ENCODE measurements at regions of chr15 and their contacts with region 1.

Region 1: DNA sequence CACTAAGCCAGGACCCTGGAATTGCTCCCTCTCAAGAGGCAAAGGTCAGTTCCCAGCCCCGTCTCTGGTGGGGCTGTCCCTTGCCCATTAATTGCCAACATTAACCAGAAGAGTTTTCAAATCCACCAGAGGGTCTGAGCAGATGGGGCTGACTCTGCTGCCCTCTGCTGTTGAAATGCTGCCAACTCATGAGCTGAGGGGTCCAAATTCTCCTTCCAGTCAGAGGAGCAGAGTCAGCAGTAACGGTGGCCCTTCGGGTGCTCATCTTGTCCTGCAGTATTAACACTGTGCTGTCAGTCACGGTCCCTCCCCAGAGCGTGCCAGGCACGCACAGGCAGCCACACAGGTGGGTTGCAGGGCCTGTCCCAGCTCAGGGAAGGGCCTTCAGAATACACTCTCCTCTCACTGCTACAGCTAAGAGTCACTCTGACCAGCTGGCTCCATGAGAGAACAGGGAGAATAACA is 10.7 kb upstream of the SPTBN5 start:
- DNase-seq: peak; percentile 50 to 86 (median 76)
- ATAC-seq: peak; percentile 86
- H3K4me3 ChIP-seq: no peak overlapping the region
- H3K4me3 Mint-ChIP-seq: no peak overlapping the region
- H3K27ac ChIP-seq: no peak overlapping the region
- H3K27ac Mint-ChIP-seq: peak overlapping the region; percentile 57
- H3K4me1 ChIP-seq: peaks cover 3% of the 10 kb centered on the region
- H3K4me1 Mint-ChIP-seq: peaks cover 6% of the 10 kb centered on the region
- H3K27me3 ChIP-seq: no peaks in the 10 kb centered on the region
- H3K27me3 Mint-ChIP-seq: no peaks in the 10 kb centered on the region
- CTCF ChIP-seq: peak; percentile 92

Region 2: GRCh38 chr15:41465822-41466421 is 438.7 kb before region 1 on chr15:
- CTCF ChIA-PET with region 1: interaction called, 7 read pairs
- POLR2A ChIA-PET with region 1: no interaction called
- intact Hi-C with region 1: loop called (anchors 2 to 5 kb)
- DNase-seq: peak in 3 of 9 experiments; percentile 22 to 65 (median 60)
- ATAC-seq: peak; percentile 69
- H3K4me3 ChIP-seq: no peak overlapping the region
- H3K4me3 Mint-ChIP-seq: no peak overlapping the region
- H3K27ac ChIP-seq: no peak overlapping the region
- H3K27ac Mint-ChIP-seq: peak overlapping the region; percentile 73
- H3K4me1 ChIP-seq: no peaks in the 10 kb centered on the region
- H3K4me1 Mint-ChIP-seq: peaks cover 6% of the 10 kb centered on the region
- H3K27me3 ChIP-seq: no peaks in the 10 kb centered on the region
- H3K27me3 Mint-ChIP-seq: no peaks in the 10 kb centered on the region
- CTCF ChIP-seq: peak; percentile 97

Region 3: DNA sequence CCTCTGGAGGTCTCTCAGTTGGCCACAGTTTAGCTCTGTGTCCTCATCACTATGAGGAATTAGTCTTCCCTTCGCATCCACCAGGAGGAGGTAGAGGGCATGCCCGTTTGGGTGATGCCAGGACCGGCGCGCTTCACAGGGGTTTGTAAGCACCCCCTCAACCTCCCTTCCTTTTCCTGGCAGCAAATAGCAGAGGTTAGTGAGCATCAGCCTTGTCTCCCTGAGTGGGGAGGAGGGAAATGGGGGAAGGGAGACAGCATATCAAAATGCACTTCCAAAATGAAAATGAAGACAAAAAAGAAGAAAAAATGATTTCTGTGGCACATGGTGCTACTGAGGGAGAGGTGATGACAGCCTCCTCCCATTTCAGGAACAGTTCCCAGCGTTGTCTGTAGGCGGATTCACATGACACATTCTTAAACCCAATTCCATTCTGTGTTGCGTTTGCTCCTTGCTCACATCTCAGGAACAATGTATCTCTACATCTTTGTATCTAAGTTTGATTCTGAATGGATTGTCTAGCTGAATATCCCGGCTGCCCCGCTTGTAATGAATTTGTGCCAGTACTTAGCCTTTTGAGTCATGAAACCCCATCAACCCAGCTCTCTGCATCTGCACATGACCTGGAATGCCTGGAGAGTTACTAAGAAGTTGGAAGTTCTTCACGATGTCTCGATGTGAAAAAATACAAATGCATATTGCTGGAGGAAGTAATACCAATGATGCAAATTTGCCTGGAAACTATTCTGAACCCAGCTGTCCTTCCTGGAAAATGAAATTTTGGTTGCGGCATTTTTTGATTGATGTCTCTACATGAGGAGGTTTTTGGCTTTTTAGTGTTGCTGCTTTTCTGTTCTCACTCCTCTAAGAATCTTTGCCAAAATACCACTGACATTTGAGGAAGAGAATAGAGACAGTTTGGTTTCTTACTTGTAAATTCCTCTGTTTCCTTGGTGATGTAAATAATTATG is 300.3 kb before region 1 on chr15:
- CTCF ChIA-PET with region 1: interaction called, 3 read pairs
- POLR2A ChIA-PET with region 1: no interaction called
- intact Hi-C with region 1: loop called in 1 of 2 experiments (anchors 5 kb)
- DNase-seq: peak; percentile 22 to 76 (median 59)
- ATAC-seq: peak; percentile 97
- H3K4me3 ChIP-seq: no peak overlapping the region
- H3K4me3 Mint-ChIP-seq: peak overlapping the region; percentile 53
- H3K27ac ChIP-seq: no peak overlapping the region
- H3K27ac Mint-ChIP-seq: no peak overlapping the region
- H3K4me1 ChIP-seq: peaks cover 4% of the 10 kb centered on the region
- H3K4me1 Mint-ChIP-seq: peaks cover 8% of the 10 kb centered on the region
- H3K27me3 ChIP-seq: no peaks in the 10 kb centered on the region
- H3K27me3 Mint-ChIP-seq: peaks cover 12% of the 10 kb centered on the region
- CTCF ChIP-seq: peak; percentile 71

Region 4: GRCh38 chr15:41811432-41812195 is 93.0 kb before region 1 on chr15:
- CTCF ChIA-PET with region 1: interaction called, 41 read pairs
- POLR2A ChIA-PET with region 1: no interaction called
- intact Hi-C with region 1: loop called (anchors 1 kb)
- DNase-seq: peak; percentile 53 to 82 (median 77)
- ATAC-seq: peak; percentile 98
- H3K4me3 ChIP-seq: no peak overlapping the region
- H3K4me3 Mint-ChIP-seq: no peak overlapping the region
- H3K27ac ChIP-seq: no peak overlapping the region
- H3K27ac Mint-ChIP-seq: peak overlapping the region; percentile 14
- H3K4me1 ChIP-seq: peaks cover 17% of the 10 kb centered on the region
- H3K4me1 Mint-ChIP-seq: peaks cover 16% of the 10 kb centered on the region
- H3K27me3 ChIP-seq: no peaks in the 10 kb centered on the region
- H3K27me3 Mint-ChIP-seq: no peaks in the 10 kb centered on the region
- CTCF ChIP-seq: peak; percentile 86

Region 5: DNA sequence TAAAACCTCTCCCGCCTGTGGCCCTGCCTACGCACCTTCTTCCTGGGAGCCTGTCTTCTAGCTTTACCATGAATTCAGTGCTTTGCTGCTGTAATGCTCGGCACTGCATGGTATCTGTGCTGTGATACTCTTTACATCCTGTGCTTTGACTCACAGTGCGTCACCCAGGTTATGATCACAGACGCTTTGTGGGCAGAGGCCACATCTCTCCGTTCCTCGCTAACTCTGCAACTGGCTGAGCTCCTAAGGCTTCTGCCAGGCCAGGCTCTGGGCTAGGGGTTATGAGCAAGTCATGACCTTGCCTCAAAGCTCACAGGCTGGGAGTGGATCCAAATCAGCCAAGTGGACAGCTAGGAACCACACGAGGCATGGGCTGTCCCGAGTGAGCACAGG is 33.9 kb before region 1 on chr15:
- CTCF ChIA-PET with region 1: interaction called, 7 read pairs
- POLR2A ChIA-PET with region 1: no interaction called
- intact Hi-C with region 1: loop called (anchors 5 kb)
- DNase-seq: peak in 8 of 9 experiments; percentile 20 to 75 (median 60)
- ATAC-seq: peak; percentile 95
- H3K4me3 ChIP-seq: no peak overlapping the region
- H3K4me3 Mint-ChIP-seq: no peak overlapping the region
- H3K27ac ChIP-seq: no peak overlapping the region
- H3K27ac Mint-ChIP-seq: peak overlapping the region; percentile 60
- H3K4me1 ChIP-seq: peaks cover 10% of the 10 kb centered on the region
- H3K4me1 Mint-ChIP-seq: peaks cover 4% of the 10 kb centered on the region
- H3K27me3 ChIP-seq: no peaks in the 10 kb centered on the region
- H3K27me3 Mint-ChIP-seq: no peaks in the 10 kb centered on the region
- CTCF ChIP-seq: no peak

Region 6: DNA sequence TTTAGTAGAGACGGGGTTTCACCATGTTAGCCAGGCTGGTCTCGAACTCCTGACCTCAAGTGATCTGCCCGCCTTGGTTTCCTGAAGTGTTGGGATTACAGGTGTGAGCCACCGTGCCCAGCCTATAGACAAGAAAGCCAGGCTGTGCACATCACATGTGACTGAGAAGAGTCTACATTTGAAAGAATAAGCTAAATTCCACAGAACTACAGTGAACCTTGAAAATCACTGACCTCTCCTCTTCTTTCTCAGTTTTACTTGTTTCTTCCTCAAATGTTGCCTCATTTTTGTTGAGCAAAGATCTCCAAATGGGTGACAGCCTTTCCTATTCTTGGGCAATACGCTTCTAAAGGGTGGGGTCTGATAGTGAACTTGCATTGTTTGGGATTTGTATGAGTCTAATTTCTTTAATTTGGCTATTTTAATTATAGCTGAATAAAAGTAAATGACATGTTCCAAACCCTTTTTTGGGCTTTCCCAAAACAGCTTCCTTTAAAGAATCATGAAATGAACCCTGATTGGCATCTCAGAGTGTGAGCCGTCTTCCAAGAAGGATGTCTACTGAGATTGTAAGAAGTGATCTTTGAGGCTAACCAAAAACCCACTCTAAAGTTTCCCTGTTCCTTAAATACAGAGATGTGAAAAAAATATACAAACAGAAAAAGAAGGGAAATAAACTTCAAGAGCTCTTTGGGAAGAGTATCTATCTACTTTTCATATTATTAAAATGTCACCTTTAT is 10.9 kb after region 1 on chr15:
- CTCF ChIA-PET with region 1: interaction called, 12 read pairs
- POLR2A ChIA-PET with region 1: interaction called, 4 read pairs
- intact Hi-C with region 1: no loop called
- DNase-seq: no peak
- ATAC-seq: no peak
- H3K4me3 ChIP-seq: no peak overlapping the region
- H3K4me3 Mint-ChIP-seq: no peak overlapping the region
- H3K27ac ChIP-seq: no peak overlapping the region
- H3K27ac Mint-ChIP-seq: no peak overlapping the region
- H3K4me1 ChIP-seq: no peaks in the 10 kb centered on the region
- H3K4me1 Mint-ChIP-seq: no peaks in the 10 kb centered on the region
- H3K27me3 ChIP-seq: no peaks in the 10 kb centered on the region
- H3K27me3 Mint-ChIP-seq: no peaks in the 10 kb centered on the region
- CTCF ChIP-seq: no peak